ENCODE measurements at regions of chr20 and their contacts with region 1.

Region 1: GRCh38 chr20:36460648-36461599 is 80.4 kb upstream of the MYL9 start:
- DNase-seq: peak; percentile 92 to 95
- ATAC-seq: peak; percentile 66 to 86 (median 78)
- H3K4me3 ChIP-seq: peak overlapping the region; percentile 22 to 98 (median 88)
- H3K27ac ChIP-seq: peak overlapping the region; percentile 97 to 100 (median 99)
- H3K4me1 ChIP-seq: peaks cover 11 to 42% (median 39%) of the 10 kb centered on the region in 9 donors
- H3K27me3 ChIP-seq: no peaks in the 10 kb centered on the region
- CTCF ChIP-seq: peak in 3 of 9 donors; percentile 19 to 37 (median 31)

Region 2: GRCh38 chr20:36377352-36378326 is 83.3 kb before region 1 on chr20:
- intact Hi-C with region 1: no loop called
- DNase-seq: no peak
- ATAC-seq: no peak
- H3K4me3 ChIP-seq: no peak overlapping the region
- H3K27ac ChIP-seq: no peak overlapping the region
- H3K4me1 ChIP-seq: no peaks in the 10 kb centered on the region
- H3K27me3 ChIP-seq: peaks cover 0 to 63% (median 19%) of the 10 kb centered on the region in 7 donors
- CTCF ChIP-seq: no peak

Region 3: GRCh38 chr20:36481381-36482043 is 20.6 kb after region 1 on chr20:
- intact Hi-C with region 1: loop called in 1 of 10 experiments (anchors 2 kb)
- DNase-seq: no peak
- ATAC-seq: peak in 1 of 8 donors; percentile 4
- H3K4me3 ChIP-seq: no peak overlapping the region
- H3K27ac ChIP-seq: peak overlapping the region in 9 of 10 donors; percentile 42 to 82 (median 77)
- H3K4me1 ChIP-seq: peaks cover 51 to 96% (median 91%) of the 10 kb centered on the region in 9 donors
- H3K27me3 ChIP-seq: no peaks in the 10 kb centered on the region
- CTCF ChIP-seq: no peak

Region 4: DNA sequence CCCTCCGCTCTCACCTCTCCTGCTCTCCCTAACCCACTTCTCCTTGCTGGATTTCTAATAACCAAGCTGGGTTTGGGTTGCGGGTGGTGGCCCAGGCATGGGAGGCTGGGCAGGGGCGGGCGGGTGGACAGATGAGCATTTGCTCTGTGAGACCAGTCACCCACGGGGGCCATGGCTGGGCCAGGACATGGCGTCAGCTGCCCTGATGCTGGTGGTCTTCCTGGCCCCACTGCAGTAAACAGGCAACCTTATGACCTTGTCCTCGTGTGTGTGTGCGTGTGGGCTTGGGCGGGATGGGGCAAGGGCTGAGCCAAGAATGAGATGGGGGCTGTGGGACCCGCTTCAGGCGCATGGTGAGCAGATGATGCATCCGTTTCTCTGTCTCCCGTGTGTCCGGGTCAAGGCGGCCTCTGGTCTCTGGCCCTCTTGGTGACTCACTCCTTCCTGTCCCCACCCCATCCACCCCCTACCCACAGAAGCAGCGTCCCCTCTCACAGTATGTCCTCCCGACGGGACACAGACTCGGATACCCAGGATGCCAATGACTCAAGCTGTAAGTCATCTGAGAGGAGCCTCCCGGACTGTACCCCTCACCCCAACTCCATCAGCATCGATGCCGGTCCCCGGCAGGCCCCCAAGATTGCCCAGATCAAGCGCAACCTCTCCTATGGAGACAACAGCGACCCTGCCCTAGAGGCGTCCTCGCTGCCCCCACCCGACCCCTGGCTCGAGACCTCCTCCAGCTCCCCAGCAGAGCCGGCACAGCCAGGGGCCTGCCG is 39.0 kb after region 1 on chr20:
- intact Hi-C with region 1: loop called in 1 of 10 experiments (anchors 2 kb)
- DNase-seq: no peak
- ATAC-seq: no peak
- H3K4me3 ChIP-seq: no peak overlapping the region
- H3K27ac ChIP-seq: peak overlapping the region in 2 of 10 donors; percentile 30 to 79
- H3K4me1 ChIP-seq: peaks cover 11 to 49% (median 30%) of the 10 kb centered on the region in 9 donors
- H3K27me3 ChIP-seq: no peaks in the 10 kb centered on the region
- CTCF ChIP-seq: no peak

Region 5: GRCh38 chr20:36519944-36520343 is 59.0 kb after region 1 on chr20:
- intact Hi-C with region 1: no loop called
- DNase-seq: no peak
- ATAC-seq: no peak
- H3K4me3 ChIP-seq: no peak overlapping the region
- H3K27ac ChIP-seq: no peak overlapping the region
- H3K4me1 ChIP-seq: peaks cover 0 to 37% (median 15%) of the 10 kb centered on the region in 9 donors
- H3K27me3 ChIP-seq: no peaks in the 10 kb centered on the region
- CTCF ChIP-seq: no peak

Region 6: DNA sequence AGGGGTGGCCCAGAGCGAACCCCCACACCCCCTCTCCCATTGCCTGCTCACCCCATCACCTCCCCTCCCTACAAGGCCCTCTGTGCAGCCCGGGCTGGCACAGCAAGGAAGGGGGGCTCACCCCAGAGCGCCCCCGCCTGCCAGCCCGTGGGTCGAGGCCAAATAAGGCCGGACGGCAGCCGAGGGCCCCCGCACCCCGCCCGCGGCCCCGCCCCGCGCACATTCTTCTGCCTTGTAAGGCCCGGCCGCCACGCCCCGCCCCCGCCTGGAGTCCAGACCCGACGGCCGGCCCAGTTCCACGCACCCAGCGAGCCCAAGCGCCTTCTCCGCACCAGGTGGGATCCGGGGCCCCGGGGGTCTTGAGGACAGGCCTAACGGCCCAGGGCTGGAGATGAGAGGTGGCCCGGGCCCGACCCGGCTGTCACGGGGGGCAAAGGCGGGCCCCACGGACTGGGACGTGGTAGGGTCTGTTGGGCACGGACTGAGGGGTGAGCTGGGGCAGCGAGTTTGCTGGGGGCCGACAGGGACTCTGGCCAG is 80.4 kb after region 1 on chr20 and contains the start of gene MYL9:
- intact Hi-C with region 1: loop called in 7 of 10 experiments (anchors 1 to 10 kb)
- DNase-seq: peak; percentile 94
- ATAC-seq: peak; percentile 84 to 91 (median 86)
- H3K4me3 ChIP-seq: peak within 1 kb of the TSS; percentile 75 to 99 (median 96)
- H3K27ac ChIP-seq: peak within 1 kb of the TSS; percentile 91 to 100 (median 98)
- H3K4me1 ChIP-seq: peaks cover 8 to 74% (median 55%) of the 10 kb centered on the region in 9 donors
- H3K27me3 ChIP-seq: no peaks in the 10 kb centered on the region
- CTCF ChIP-seq: peak in 1 of 9 donors; percentile 13
- total RNA-seq, gene MYL9: 1,611 to 2,234 (median 1,868) TPM

Region 7: GRCh38 chr20:36745927-36746659 is 285.2 kb after region 1 on chr20 and contains the start of gene NDRG3:
- intact Hi-C with region 1: loop called in 1 of 10 experiments (anchors 10 kb)
- DNase-seq: peak; percentile 93 to 95
- ATAC-seq: peak; percentile 90 to 99 (median 95)
- H3K4me3 ChIP-seq: peak within 1 kb of the TSS; percentile 54 to 96 (median 84)
- H3K27ac ChIP-seq: peak within 1 kb of the TSS; percentile 73 to 94 (median 88)
- H3K4me1 ChIP-seq: peaks cover 5 to 54% (median 22%) of the 10 kb centered on the region in 9 donors
- H3K27me3 ChIP-seq: no peaks in the 10 kb centered on the region
- CTCF ChIP-seq: peak in 4 of 9 donors; percentile 3 to 17 (median 9)
- total RNA-seq, gene NDRG3: 20.7 to 37.0 (median 30.7) TPM

Region 8: GRCh38 chr20:36827474-36827873 is 366.6 kb after region 1 on chr20:
- intact Hi-C with region 1: no loop called
- DNase-seq: no peak
- ATAC-seq: no peak
- H3K4me3 ChIP-seq: no peak overlapping the region
- H3K27ac ChIP-seq: peak overlapping the region in 8 of 10 donors; percentile 9 to 90 (median 66)
- H3K4me1 ChIP-seq: peaks cover 19 to 65% (median 52%) of the 10 kb centered on the region in 9 donors
- H3K27me3 ChIP-seq: no peaks in the 10 kb centered on the region
- CTCF ChIP-seq: no peak